ENCODE measurements at regions of chr12 and their contacts with region 1.

Region 1: GRCh38 chr12:1787714-1788113 is 32.7 kb upstream of the LRTM2 start:
- DNase-seq: no peak
- ATAC-seq: no peak
- H3K4me3 Mint-ChIP-seq: no peak overlapping the region
- H3K27ac Mint-ChIP-seq: no peak overlapping the region
- H3K4me1 Mint-ChIP-seq: peaks cover 18% of the 10 kb centered on the region
- H3K27me3 Mint-ChIP-seq: no peaks in the 10 kb centered on the region

Region 2: GRCh38 chr12:1650260-1650977 is 137.3 kb before region 1 on chr12:
- CTCF ChIA-PET with region 1: interaction called, 246 read pairs
- POLR2A ChIA-PET with region 1: interaction called, 4 read pairs
- intact Hi-C with region 1: loop called (anchors 1 kb)
- DNase-seq: no peak
- ATAC-seq: no peak
- H3K4me3 Mint-ChIP-seq: no peak overlapping the region
- H3K27ac Mint-ChIP-seq: no peak overlapping the region
- H3K4me1 Mint-ChIP-seq: peaks cover 1% of the 10 kb centered on the region
- H3K27me3 Mint-ChIP-seq: peaks cover 9% of the 10 kb centered on the region